ENCODE measurements at regions of chr12 and their contacts with region 1.

Region 1: DNA sequence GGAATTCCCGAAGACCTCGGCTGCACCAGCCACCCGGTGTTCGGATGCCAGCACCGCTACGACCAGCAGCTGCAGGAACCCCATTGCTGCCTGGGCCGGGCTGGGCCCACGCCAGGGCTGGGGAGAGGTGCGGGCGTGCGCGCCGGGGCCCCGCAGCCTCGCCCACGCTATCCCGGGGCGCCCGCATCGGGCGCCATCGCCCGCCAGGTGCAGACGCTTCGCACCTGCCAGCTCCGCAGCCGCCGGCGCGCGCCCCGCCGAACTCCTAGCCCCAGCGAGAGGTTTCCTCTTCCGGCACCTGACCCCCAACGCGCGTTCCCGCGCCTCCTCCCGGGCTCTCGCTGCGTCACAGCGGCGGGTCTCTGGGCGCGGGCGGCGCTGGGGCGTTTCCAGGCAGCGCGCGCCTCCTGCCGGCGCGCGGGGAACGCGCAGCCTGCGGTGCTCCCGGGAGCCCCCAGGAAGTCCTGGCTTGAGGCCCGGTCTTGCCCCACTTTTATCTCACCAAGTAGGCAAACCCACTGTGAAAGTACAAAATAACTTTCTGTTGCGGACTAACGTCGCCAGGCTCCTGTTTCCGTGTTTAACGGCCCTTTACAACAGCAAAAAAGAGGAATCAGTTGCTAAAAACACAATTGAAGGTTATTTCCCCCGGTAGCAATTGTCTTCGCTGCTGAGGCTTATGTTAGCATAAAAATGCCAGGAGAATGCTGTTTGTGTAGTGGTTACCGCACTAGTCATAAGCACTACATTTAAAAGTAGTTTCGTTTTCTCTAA is at the start of gene TM7SF3:
- DNase-seq: peak; percentile 81
- ATAC-seq: peak; percentile 80
- H3K4me3 ChIP-seq: peak within 1 kb of the TSS; percentile 78
- H3K27ac ChIP-seq: peak within 1 kb of the TSS; percentile 94
- H3K4me1 ChIP-seq: peaks cover 16% of the 10 kb centered on the region
- H3K27me3 ChIP-seq: no peaks in the 10 kb centered on the region
- CTCF ChIP-seq: peak; percentile 85 to 99 (median 99)
- EP300 ChIP-seq: no peak
- POLR2A ChIP-seq: peak; percentile 81
- RAD21 ChIP-seq: peak; percentile 78
- polyA plus RNA-seq, gene TM7SF3: 31.4 to 34.1 TPM

Region 2: GRCh38 chr12:26853303-26854030 is 160.8 kb before region 1 on chr12:
- CTCF ChIA-PET with region 1: interaction called, 16 read pairs
- POLR2A ChIA-PET with region 1: no interaction called
- RAD21 ChIA-PET with region 1: interaction called, 9 read pairs
- SMC1A ChIA-PET with region 1: interaction called, 11 read pairs
- in situ Hi-C with region 1: no loop called
- intact Hi-C with region 1: loop called (anchors 1 kb)
- DNase-seq: no peak
- ATAC-seq: peak; percentile 97
- H3K4me3 ChIP-seq: no peak overlapping the region
- H3K27ac ChIP-seq: no peak overlapping the region
- H3K4me1 ChIP-seq: peaks cover 3% of the 10 kb centered on the region; the same call in 1 of the 2 replicates
- H3K27me3 ChIP-seq: no peaks in the 10 kb centered on the region
- CTCF ChIP-seq: peak; percentile 81 to 94 (median 88); a peak in 5 of 6 replicates
- EP300 ChIP-seq: no peak; a peak in 1 of 4 replicates
- POLR2A ChIP-seq: no peak
- RAD21 ChIP-seq: peak; percentile 93

Region 3: DNA sequence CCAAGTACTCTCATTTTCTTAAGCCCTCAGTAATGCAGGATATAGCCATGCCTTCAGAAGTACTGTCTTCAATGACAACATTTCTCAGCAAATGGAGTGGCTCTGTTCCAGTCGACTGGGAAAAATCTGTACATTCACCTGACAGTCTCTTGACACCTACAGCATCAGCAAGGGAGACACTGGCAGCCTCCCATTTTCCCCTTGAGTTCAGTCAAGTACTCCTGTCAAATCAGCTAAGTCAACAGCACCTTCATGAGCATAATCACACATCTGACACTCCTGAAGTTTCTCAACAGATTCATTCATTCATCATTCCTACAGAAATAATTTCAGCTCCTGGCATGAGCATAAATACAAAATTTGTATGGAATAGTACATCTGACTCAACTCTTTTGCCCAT is 122.6 kb before region 1 on chr12:
- CTCF ChIA-PET with region 1: interaction called, 72 read pairs
- POLR2A ChIA-PET with region 1: no interaction called
- RAD21 ChIA-PET with region 1: interaction called, 28 read pairs
- SMC1A ChIA-PET with region 1: interaction called, 36 read pairs
- in situ Hi-C with region 1: no loop called
- intact Hi-C with region 1: no loop called
- DNase-seq: no peak
- ATAC-seq: no peak
- H3K4me3 ChIP-seq: no peak overlapping the region
- H3K27ac ChIP-seq: no peak overlapping the region
- H3K4me1 ChIP-seq: no peaks in the 10 kb centered on the region
- H3K27me3 ChIP-seq: no peaks in the 10 kb centered on the region
- CTCF ChIP-seq: no peak
- EP300 ChIP-seq: no peak
- POLR2A ChIP-seq: no peak
- RAD21 ChIP-seq: no peak

Region 4: DNA sequence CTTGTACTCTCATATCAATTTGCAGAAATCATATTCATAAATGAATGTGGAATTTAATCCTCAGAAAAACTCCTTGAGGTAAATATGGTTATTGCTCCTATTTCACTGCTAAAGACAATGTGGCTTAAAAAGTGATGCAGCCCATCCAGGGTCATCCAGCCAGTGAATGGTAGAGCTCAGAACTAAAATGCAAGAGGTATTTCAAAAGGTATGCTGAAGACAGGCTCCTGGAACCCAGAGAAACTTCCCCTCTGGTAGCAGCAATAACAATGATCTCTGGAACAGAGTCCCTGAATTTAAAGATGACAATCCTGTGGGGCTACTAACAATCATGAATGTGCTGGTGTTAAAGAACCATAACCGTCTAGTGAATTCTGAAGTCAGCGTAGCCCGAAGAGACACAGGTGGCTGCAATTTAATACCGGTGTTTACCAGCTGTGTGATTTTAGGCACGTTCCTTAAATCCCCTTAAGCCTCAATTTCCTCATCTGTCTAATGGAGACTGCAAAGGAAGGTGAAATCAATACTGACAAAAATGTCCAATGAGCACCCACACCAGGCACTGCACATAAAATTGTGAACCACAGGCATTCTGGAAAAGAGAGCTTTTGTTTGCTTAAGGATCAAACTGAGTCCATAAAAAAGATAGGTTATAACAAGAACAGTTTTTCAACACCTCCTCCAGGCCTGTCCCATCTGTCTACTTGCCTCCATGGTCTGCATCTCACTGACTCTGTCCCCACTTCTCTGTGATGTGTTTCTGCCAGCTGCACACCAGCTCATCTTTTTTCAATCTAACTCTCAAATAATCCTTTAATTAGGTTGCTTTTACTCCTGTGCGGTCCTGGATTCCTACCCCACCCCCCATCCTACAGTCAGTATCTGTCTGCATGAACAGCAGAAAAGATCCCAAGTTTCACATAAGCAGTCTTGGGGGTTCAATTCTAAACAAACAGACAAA is 10.6 kb before region 1 on chr12:
- CTCF ChIA-PET with region 1: interaction called, 14 read pairs
- POLR2A ChIA-PET with region 1: interaction called, 5 read pairs
- RAD21 ChIA-PET with region 1: interaction called, 27 read pairs
- SMC1A ChIA-PET with region 1: interaction called, 26 read pairs
- in situ Hi-C with region 1: no loop called
- intact Hi-C with region 1: no loop called
- DNase-seq: no peak
- ATAC-seq: peak; percentile 27
- H3K4me3 ChIP-seq: 0 out of 2 replicates have a peak overlapping the region, but pooled peaks have one; percentile 17
- H3K27ac ChIP-seq: no peak overlapping the region
- H3K4me1 ChIP-seq: no peaks in the 10 kb centered on the region
- H3K27me3 ChIP-seq: no peaks in the 10 kb centered on the region
- CTCF ChIP-seq: no peak
- EP300 ChIP-seq: no peak
- POLR2A ChIP-seq: no peak
- RAD21 ChIP-seq: no peak

Region 5: DNA sequence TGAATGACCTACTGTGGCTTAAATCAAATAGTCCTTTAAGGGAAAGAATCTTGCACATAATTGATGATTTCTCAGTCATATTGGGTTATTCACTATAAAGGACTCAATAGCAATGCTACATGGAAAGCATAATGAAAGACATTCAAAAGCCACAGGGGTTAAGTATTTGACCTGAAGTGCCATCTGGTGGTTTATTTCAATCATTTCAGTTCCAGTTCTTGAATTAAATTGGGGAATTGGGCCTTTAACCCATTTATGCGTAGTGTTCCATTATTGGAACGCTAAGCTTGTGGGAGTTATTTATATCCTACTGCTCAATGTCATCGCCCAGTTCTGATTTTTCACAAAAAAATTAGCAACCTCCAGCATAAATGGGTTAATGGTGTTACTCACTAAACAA is 109.4 kb after region 1 on chr12:
- CTCF ChIA-PET with region 1: interaction called, 8 read pairs
- POLR2A ChIA-PET with region 1: no interaction called
- RAD21 ChIA-PET with region 1: interaction called, 6 read pairs
- SMC1A ChIA-PET with region 1: interaction called, 10 read pairs
- in situ Hi-C with region 1: no loop called
- intact Hi-C with region 1: no loop called
- DNase-seq: no peak
- ATAC-seq: peak; percentile 57
- H3K4me3 ChIP-seq: no peak overlapping the region
- H3K27ac ChIP-seq: no peak overlapping the region
- H3K4me1 ChIP-seq: no peaks in the 10 kb centered on the region
- H3K27me3 ChIP-seq: no peaks in the 10 kb centered on the region
- CTCF ChIP-seq: peak; percentile 11 to 32 (median 24); a peak in 1 of 6 replicates
- EP300 ChIP-seq: no peak
- POLR2A ChIP-seq: no peak
- RAD21 ChIP-seq: peak; percentile 60

Region 6: GRCh38 chr12:27243804-27244683 is 229.8 kb after region 1 on chr12 and contains the start of gene STK38L:
- CTCF ChIA-PET with region 1: interaction called, 11 read pairs
- POLR2A ChIA-PET with region 1: interaction called, 5 read pairs
- RAD21 ChIA-PET with region 1: interaction called, 13 read pairs
- SMC1A ChIA-PET with region 1: interaction called, 6 read pairs
- in situ Hi-C with region 1: no loop called
- intact Hi-C with region 1: loop called (anchors 2 kb)
- DNase-seq: peak; percentile 86
- ATAC-seq: peak; percentile 90
- H3K4me3 ChIP-seq: peak within 1 kb of the TSS; percentile 86
- H3K27ac ChIP-seq: peak within 1 kb of the TSS; percentile 93
- H3K4me1 ChIP-seq: peaks cover 13% of the 10 kb centered on the region; the same call in 1 of the 2 replicates
- H3K27me3 ChIP-seq: no peaks in the 10 kb centered on the region
- CTCF ChIP-seq: peak; percentile 18 to 38 (median 21); a peak in 4 of 6 replicates
- EP300 ChIP-seq: peak in 1 of 2 experiments; percentile 29; a peak in 1 of 4 replicates
- POLR2A ChIP-seq: peak; percentile 98
- RAD21 ChIP-seq: peak; percentile 46
- polyA plus RNA-seq, gene STK38L: 43.0 to 50.2 TPM

Measured in GM12878 (cell line).